ENCODE measurements at regions of chr7 and their contacts with region 1.

Region 1: GRCh38 chr7:42831718-42832431 is 80.0 kb downstream of the C7orf25 start:
- DNase-seq: peak; percentile 67
- H3K4me3 ChIP-seq: no peak overlapping the region
- H3K27ac ChIP-seq: no peak overlapping the region
- H3K4me1 ChIP-seq: no peaks in the 10 kb centered on the region; the same call in 1 of the 2 replicates
- H3K27me3 ChIP-seq: no peaks in the 10 kb centered on the region

Region 2: DNA sequence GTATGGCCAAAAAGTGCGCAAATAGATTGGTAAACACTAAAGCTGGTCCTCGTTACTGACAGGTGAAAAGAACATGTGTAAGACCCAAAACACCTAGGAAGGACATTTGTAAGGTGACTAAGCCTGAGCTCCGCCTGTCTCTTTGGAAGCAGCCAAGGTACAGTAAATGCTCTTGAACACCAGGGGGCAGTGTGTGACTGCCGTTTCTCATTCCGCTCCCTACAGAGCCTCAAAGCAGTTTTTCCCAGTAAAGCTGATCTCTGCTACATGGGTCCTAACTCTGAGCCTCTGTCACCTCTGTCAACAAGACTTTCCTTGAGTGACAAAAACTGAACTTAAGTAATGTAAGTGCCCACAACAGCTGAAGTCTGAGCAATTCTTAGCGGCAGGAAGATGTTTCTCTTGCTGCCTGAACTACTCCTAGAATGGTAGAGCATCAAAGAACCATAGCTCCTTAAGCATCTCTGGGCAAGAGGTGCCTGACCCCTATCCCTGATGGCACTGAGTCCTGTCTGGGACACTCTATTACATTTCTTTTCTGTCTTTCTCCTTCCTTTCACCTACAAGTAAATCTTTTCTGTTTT is 891.0 kb before region 1 on chr7:
- in situ Hi-C with region 1: loop called (anchors 10 kb)
- DNase-seq: peak; percentile 84
- H3K4me3 ChIP-seq: no peak overlapping the region
- H3K27ac ChIP-seq: no peak overlapping the region
- H3K4me1 ChIP-seq: peaks cover 8% of the 10 kb centered on the region
- H3K27me3 ChIP-seq: no peaks in the 10 kb centered on the region

Measured in GM23248 (cell line).